Activated T-helper 2 cell treated with anti-CD3 and anti-CD28 coated beads, Interferon-gamma antibody, Interleukin-2, Interleukin-4, amounts not matched to agents 10 μg/mL and 5 μg/mL and 100 μg/mL, durations not matched to agents 14 hours and 24 hours and 36 hours (primary cell): ENCODE measurements at regions of chr3 and their contacts with region 1.

Region 1: DNA sequence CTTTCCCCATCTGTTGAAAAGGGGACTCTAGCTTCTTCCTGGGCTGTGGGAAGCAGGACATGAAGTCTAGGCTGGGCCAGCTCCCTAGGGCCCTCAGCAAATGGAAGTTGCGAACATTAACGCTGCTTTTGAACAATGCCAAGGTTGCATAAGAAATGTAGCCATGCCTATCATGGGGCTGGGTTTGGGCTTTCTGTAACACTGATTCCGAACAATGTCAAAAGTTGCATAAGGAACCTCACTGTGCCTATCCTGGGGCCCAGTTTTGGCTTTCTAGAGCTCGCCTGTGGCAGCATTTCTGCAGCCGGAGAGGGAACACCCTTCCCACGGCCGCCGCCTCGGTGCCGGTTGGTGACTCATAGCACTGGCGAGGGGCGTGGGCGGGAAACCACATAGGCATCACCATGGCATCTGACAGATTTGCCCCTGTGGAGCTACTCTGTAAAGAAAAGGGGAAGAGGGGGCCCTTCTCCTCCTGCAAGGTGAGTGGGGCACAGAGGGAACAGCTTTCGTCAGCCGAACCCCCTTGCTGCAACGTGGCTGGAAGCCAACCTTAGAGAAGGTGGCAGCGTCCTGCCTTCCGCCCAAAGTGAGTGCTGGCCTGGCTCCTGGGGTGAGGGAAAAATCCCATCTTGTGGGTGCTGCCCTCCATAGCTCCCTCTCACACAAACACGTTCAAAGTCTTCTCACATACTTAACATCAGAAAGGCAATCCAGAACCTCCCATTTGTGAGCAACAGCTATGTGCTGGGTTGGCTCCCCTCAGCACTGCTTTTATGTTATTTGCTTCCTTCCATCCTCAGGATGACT is 46.6 kb upstream of the ATP2B2 start:
- DNase-seq: peak; percentile 61
- H3K4me3 Mint-ChIP-seq: peak overlapping the region; percentile 48
- H3K27ac Mint-ChIP-seq: peak overlapping the region; percentile 79
- H3K4me1 Mint-ChIP-seq: peaks cover 36% of the 10 kb centered on the region
- H3K27me3 Mint-ChIP-seq: peaks cover 3% of the 10 kb centered on the region

Region 2: GRCh38 chr3:10366651-10367101 is 185.3 kb before region 1 on chr3:
- intact Hi-C with region 1: loop called (anchors 2 kb)
- DNase-seq: no peak
- H3K4me3 Mint-ChIP-seq: no peak overlapping the region
- H3K27ac Mint-ChIP-seq: peak overlapping the region; percentile 61
- H3K4me1 Mint-ChIP-seq: peaks cover 28% of the 10 kb centered on the region
- H3K27me3 Mint-ChIP-seq: no peaks in the 10 kb centered on the region

Region 3: GRCh38 chr3:10437272-10437994 is 114.6 kb before region 1 on chr3:
- intact Hi-C with region 1: loop called (anchors 5 kb)
- DNase-seq: peak; percentile 40
- H3K4me3 Mint-ChIP-seq: no peak overlapping the region
- H3K27ac Mint-ChIP-seq: peak overlapping the region; percentile 47
- H3K4me1 Mint-ChIP-seq: peaks cover 25% of the 10 kb centered on the region
- H3K27me3 Mint-ChIP-seq: no peaks in the 10 kb centered on the region

Region 4: GRCh38 chr3:10602769-10603768 is 51.0 kb after region 1 on chr3:
- intact Hi-C with region 1: loop called (anchors 1 kb)
- DNase-seq: peak; percentile 59
- H3K4me3 Mint-ChIP-seq: peak overlapping the region; percentile 23
- H3K27ac Mint-ChIP-seq: peak overlapping the region; percentile 1
- H3K4me1 Mint-ChIP-seq: peaks cover 24% of the 10 kb centered on the region
- H3K27me3 Mint-ChIP-seq: peaks cover 22% of the 10 kb centered on the region